ENCODE measurements at regions of chr16 and their contacts with region 1.

Region 1: DNA sequence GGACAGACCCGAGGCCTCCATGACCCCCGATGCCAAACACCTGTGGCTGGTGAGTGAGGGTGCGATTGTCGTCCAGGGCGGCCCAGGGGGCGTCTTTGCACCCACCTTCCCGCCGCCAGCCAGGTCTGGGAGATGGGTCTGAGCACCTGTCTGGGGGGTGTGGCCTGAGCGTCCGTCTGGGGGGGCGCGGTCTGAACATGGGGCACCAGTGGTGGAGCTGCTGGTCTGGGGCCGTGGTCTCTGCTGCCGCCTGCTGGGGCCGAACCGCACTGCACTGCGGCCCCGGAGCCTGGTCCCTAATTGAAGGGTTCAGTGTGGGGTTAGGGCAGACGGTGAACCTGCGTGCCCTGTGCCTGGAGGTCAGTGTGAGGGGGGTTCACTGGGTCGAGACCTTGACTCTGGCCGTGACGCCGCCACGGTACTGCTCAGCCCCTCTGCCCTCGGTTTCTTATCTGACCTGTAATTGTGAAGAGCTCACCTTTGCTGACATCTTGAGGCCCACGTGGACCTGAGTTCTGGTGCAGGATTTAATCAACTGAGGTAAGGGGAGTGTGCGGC is 12.6 kb upstream of the TCF25 start:
- DNase-seq: peak; percentile 83
- H3K27ac ChIP-seq: no peak overlapping the region
- CTCF ChIP-seq: peak; percentile 98

Region 2: DNA sequence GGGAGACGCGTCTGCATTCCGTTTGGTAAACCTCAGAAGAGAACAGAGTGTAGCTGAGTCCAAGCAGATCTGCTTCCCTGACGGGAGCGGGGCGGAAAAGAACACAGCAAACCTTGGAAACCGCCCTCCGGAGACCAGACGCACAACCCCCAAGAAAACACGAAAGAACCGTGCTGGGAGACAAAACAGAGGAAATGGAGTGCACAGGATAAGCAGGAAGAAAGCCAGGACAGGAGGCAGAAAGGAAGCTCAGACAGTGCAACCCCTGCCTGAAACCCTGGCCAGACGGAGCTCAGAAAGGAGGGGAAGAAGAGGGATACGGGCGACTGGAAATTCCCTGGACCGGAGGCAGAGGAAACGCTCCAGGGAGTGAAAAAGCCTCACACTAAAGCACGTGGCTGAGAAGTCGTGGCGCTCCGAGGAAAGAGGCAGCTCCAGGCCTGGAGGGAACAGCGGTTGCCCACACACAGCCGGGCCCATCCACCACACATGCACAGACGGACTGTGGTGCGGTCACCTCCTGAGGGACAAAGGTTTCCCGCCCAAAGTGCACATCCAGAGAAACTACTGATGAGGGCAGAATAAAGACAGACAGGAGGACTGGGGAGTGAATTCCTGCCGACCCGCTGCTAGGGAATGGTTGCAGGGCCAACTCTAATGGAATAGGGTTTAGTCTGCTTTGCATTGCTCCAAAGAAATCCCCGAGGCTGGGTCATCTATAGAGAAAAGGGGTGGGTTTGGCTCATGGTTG is 237.1 kb before region 1 on chr16:
- CTCF ChIA-PET with region 1: no interaction called
- POLR2A ChIA-PET with region 1: no interaction called
- DNase-seq: no peak
- H3K27ac ChIP-seq: peak overlapping the region; percentile 31
- CTCF ChIP-seq: no peak

Region 3: GRCh38 chr16:89737341-89738071 is 123.3 kb before region 1 on chr16:
- CTCF ChIA-PET with region 1: no interaction called
- POLR2A ChIA-PET with region 1: no interaction called
- DNase-seq: no peak
- H3K27ac ChIP-seq: peak overlapping the region; percentile 58
- CTCF ChIP-seq: no peak

Region 4: GRCh38 chr16:89873109-89873971 is 12.5 kb after region 1 on chr16 and contains the start of gene TCF25:
- CTCF ChIA-PET with region 1: interaction called, 10 read pairs
- POLR2A ChIA-PET with region 1: no interaction called
- DNase-seq: peak; percentile 93
- H3K27ac ChIP-seq: peak within 1 kb of the TSS; percentile 98
- CTCF ChIP-seq: no peak